Activated naive CD4-positive, alpha-beta T cell treated with anti-CD3 and anti-CD28 coated beads for 36 hours (primary cell): ENCODE measurements at regions of chr1 and their contacts with region 1.

Region 1: GRCh38 chr1:207885129-207886032 is 25.5 kb downstream of the CD34 start:
- DNase-seq: peak; percentile 85
- H3K4me3 Mint-ChIP-seq: no peak overlapping the region
- H3K27ac Mint-ChIP-seq: peak overlapping the region; percentile 97
- H3K4me1 Mint-ChIP-seq: peaks cover 29% of the 10 kb centered on the region
- H3K27me3 Mint-ChIP-seq: no peaks in the 10 kb centered on the region

Region 2: DNA sequence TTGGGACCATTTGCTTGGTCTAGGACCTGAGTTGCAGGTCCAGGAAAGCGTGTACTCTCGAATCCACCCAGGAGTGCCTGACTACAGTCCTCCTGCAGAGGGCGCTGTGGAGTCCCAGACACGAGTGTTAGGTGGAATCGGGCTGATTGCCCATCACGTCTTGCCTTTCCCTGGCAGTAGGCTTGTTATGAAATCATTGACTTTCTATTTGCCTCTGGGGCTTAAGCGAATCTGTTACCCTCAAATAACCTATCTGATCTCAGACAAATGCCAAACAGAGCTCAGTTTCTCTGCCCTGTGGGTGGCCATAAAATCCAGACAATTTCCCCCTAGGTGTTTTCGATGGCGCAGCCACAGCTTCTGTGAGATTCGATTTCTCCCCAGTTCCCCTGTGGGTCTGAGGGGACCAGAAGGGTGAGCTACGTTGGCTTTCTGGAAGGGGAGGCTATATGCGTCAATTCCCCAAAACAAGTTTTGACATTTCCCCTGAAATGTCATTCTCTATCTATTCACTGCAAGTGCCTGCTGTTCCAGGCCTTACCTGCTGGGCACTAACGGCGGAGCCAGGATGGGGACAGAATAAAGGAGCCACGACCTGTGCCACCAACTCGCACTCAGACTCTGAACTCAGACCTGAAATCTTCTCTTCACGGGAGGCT is 1020.2 kb before region 1 on chr1 and contains the start of gene IL20:
- CTCF ChIA-PET with region 1: no interaction called
- intact Hi-C with region 1: no loop called
- DNase-seq: peak; percentile 98
- H3K4me3 Mint-ChIP-seq: no peak within 1 kb of the TSS
- H3K27ac Mint-ChIP-seq: no peak within 1 kb of the TSS
- H3K4me1 Mint-ChIP-seq: peaks cover 30% of the 10 kb centered on the region
- H3K27me3 Mint-ChIP-seq: no peaks in the 10 kb centered on the region
- total RNA-seq, gene IL20: 0.31 TPM in 1 of 2 experiments, not detected in the other

Region 3: DNA sequence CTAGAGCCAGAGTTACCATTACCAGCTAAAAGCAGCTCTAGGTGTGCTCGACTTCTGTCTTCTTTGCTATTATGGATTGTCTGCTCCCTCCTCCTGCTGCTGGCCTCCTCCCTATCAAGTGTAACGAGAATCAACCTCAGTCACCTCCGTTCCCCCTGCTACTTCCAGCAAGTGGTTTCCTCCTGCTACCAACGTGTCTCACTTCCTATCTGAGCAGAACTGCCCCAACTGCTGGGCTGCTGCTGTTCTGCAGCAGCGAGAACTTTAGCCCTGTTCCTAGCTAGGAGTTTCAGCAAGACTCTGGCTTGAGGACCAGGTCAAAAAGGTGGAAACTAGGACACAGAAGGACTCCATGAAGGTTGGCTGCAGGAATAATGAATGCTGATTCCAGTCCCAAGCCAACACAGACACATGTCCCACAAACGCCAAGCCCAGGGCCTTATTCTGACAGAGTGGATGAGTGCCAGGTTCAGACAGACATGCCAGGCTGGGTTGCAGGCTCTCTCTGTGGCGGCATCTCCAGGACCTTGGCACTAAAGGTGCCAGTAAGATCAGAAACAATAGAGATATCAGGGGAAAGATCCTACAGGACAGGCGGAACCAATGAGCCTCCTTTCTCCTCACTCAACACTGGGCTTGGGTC is 21.4 kb before region 1 on chr1:
- CTCF ChIA-PET with region 1: interaction called, 188 read pairs
- intact Hi-C with region 1: no loop called
- DNase-seq: peak; percentile 82
- H3K4me3 Mint-ChIP-seq: peak overlapping the region; percentile 52
- H3K27ac Mint-ChIP-seq: peak overlapping the region; percentile 83
- H3K4me1 Mint-ChIP-seq: peaks cover 63% of the 10 kb centered on the region
- H3K27me3 Mint-ChIP-seq: no peaks in the 10 kb centered on the region

Region 4: DNA sequence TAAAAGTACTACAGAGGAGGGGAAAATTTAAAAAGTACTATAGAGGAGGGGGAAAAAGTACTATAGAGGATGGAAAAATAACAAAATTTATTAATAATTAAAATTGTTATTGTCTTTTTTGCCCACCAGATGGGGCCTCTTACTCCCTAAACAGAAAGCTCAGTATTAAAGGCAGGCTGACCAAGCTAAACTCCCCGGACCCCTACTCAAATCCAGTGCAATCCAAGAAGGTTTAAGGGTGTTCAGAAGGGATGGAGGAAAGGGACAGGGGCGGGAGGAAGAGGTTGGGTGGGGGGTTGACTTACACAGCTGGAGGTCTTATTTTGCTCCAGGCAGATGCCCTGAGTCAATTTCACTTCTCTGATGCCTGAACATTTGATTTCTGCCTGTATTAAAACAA is 11.8 kb after region 1 on chr1:
- CTCF ChIA-PET with region 1: interaction called, 58 read pairs
- intact Hi-C with region 1: no loop called
- DNase-seq: no peak
- H3K4me3 Mint-ChIP-seq: no peak overlapping the region
- H3K27ac Mint-ChIP-seq: no peak overlapping the region
- H3K4me1 Mint-ChIP-seq: no peaks in the 10 kb centered on the region
- H3K27me3 Mint-ChIP-seq: peaks cover 4% of the 10 kb centered on the region

Region 5: GRCh38 chr1:207910591-207911354 is 25.4 kb after region 1 on chr1 and contains the start of gene CD34:
- CTCF ChIA-PET with region 1: interaction called, 17 read pairs
- intact Hi-C with region 1: no loop called
- DNase-seq: peak; percentile 51
- H3K4me3 Mint-ChIP-seq: peak within 1 kb of the TSS; percentile 63
- H3K27ac Mint-ChIP-seq: no peak within 1 kb of the TSS
- H3K4me1 Mint-ChIP-seq: peaks cover 16% of the 10 kb centered on the region
- H3K27me3 Mint-ChIP-seq: peaks cover 52% of the 10 kb centered on the region
- total RNA-seq, gene CD34: 0.02 TPM

Region 6: GRCh38 chr1:207963427-207964194 is 78.2 kb after region 1 on chr1:
- CTCF ChIA-PET with region 1: interaction called, 204 read pairs
- intact Hi-C with region 1: loop called (anchors 1 kb)
- DNase-seq: peak; percentile 80
- H3K4me3 Mint-ChIP-seq: peak overlapping the region; percentile 81
- H3K27ac Mint-ChIP-seq: no peak overlapping the region
- H3K4me1 Mint-ChIP-seq: peaks cover 10% of the 10 kb centered on the region
- H3K27me3 Mint-ChIP-seq: peaks cover 27% of the 10 kb centered on the region

Region 7: GRCh38 chr1:208085655-208086515 is 200.5 kb after region 1 on chr1:
- CTCF ChIA-PET with region 1: no interaction called
- intact Hi-C with region 1: loop called (anchors 5 kb)
- DNase-seq: no peak
- H3K4me3 Mint-ChIP-seq: peak overlapping the region; percentile 70
- H3K27ac Mint-ChIP-seq: peak overlapping the region; percentile 77
- H3K4me1 Mint-ChIP-seq: peaks cover 28% of the 10 kb centered on the region
- H3K27me3 Mint-ChIP-seq: no peaks in the 10 kb centered on the region